Activated CD4-positive, alpha-beta T cell treated with anti-CD3 and anti-CD28 coated beads for 36 hours (primary cell): ENCODE measurements at regions of chr22 and their contacts with region 1.

Region 1: DNA sequence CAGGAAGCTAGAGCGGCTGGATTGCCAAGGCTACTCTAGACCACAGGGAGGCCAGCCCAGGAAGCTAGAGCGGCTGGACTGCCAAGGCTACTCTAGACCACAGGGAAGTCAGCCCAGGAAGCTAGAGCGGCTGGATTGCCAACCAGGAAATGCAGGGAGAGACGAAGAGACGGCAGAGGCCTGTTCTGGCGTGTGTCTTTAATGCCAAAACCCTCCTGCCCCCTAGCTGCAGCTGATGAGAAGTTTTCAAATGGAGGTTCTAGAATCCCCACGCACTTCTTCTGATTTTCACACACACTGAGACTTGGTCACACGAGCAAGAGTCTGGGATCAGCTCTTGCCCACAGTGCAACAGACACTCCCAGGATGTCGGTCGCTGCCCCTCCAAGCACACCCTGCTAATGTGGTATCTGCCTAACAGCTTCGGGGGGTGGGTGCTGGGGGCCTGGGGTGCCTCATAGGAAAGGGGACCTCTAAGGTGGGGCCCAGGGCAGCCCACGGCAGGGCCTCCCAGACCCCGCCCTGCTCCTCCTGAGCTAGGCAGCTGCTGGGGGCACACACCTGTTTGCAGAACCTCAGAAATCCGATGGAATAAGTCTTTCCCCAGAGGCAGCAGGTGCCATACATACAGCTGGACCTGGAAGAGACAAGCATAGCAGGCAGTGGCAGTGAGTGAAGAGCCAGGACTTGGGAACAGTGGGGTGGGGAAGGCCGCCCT is 28.5 kb downstream of the MAFF start:
- DNase-seq: peak; percentile 58
- ATAC-seq: peak; percentile 69
- H3K4me3 Mint-ChIP-seq: no peak overlapping the region
- H3K27ac Mint-ChIP-seq: no peak overlapping the region
- H3K4me1 Mint-ChIP-seq: no peaks in the 10 kb centered on the region
- H3K27me3 Mint-ChIP-seq: no peaks in the 10 kb centered on the region

Region 2: GRCh38 chr22:38104084-38104483 is 126.2 kb before region 1 on chr22:
- CTCF ChIA-PET with region 1: interaction called, 8 read pairs
- POLR2A ChIA-PET with region 1: no interaction called
- intact Hi-C with region 1: loop called in 1 of 2 experiments (anchors 2 kb)
- DNase-seq: no peak
- ATAC-seq: no peak
- H3K4me3 Mint-ChIP-seq: no peak overlapping the region
- H3K27ac Mint-ChIP-seq: no peak overlapping the region
- H3K4me1 Mint-ChIP-seq: peaks cover 4% of the 10 kb centered on the region
- H3K27me3 Mint-ChIP-seq: no peaks in the 10 kb centered on the region

Region 3: GRCh38 chr22:38114484-38115398 is 115.5 kb before region 1 on chr22:
- CTCF ChIA-PET with region 1: interaction called, 4 read pairs
- POLR2A ChIA-PET with region 1: no interaction called
- intact Hi-C with region 1: loop called in 1 of 2 experiments (anchors 1 kb)
- DNase-seq: peak; percentile 89
- ATAC-seq: peak; percentile 95
- H3K4me3 Mint-ChIP-seq: no peak overlapping the region
- H3K27ac Mint-ChIP-seq: no peak overlapping the region
- H3K4me1 Mint-ChIP-seq: no peaks in the 10 kb centered on the region
- H3K27me3 Mint-ChIP-seq: no peaks in the 10 kb centered on the region

Region 4: DNA sequence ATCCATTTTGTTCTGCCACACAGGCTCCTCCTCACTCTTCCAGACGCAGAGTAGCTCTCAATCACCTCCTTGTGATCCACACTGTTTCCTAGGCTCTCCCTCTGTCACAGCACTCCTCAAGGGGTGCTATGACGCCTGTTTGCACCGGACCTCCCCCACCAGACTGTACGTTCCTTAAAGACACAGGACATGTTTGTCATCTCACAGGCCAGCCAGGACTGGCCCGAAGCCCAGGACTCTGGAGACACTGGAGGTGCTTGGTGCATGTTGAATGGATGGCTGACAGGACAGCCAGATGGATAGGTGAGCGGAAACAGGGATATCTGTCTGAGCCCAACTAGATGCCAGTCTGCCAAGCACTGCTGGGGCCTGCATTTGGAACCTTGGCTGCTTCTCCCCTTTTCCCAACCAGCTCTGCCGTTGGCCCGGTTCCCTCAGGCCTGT is 62.3 kb before region 1 on chr22:
- CTCF ChIA-PET with region 1: no interaction called
- POLR2A ChIA-PET with region 1: no interaction called
- intact Hi-C with region 1: no loop called
- DNase-seq: no peak
- ATAC-seq: no peak
- H3K4me3 Mint-ChIP-seq: no peak overlapping the region
- H3K27ac Mint-ChIP-seq: no peak overlapping the region
- H3K4me1 Mint-ChIP-seq: peaks cover 10% of the 10 kb centered on the region
- H3K27me3 Mint-ChIP-seq: no peaks in the 10 kb centered on the region